ENCODE measurements at regions of chr15 and their contacts with region 1.

Region 1: GRCh38 chr15:98853161-98853560 is 154.4 kb downstream of the PGPEP1L start:
- DNase-seq: peak; percentile 87 to 96 (median 92)
- H3K4me3 ChIP-seq: peak overlapping the region; percentile 53 to 85 (median 71)
- H3K27ac ChIP-seq: peak overlapping the region; percentile 89 to 100 (median 99)
- H3K27me3 ChIP-seq: no peaks in the 10 kb centered on the region
- CTCF ChIP-seq: peak in 45 of 56 donors; percentile 3 to 53 (median 31)

Region 2: DNA sequence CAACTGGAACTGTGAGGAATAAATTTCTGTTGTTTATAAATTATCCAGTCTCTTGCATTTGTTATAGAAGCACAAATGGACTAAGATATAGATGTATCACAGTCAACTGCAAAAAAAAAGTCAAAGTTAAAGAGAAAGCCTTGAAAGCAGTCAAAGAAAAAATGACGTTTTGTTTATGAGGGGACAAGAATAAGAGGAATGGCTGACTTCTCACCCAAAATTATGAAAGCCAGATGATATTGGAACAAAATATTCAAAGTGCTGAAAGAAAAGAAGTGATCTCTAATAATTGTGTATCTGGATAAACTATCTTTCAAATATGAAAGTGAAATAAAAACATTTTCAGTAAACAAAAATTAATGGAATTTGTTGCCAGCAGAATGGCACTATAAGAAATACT is 376.6 kb before region 1 on chr15:
- intact Hi-C with region 1: no loop called
- DNase-seq: no peak
- H3K4me3 ChIP-seq: no peak overlapping the region
- H3K27ac ChIP-seq: no peak overlapping the region
- H3K27me3 ChIP-seq: no peaks in the 10 kb centered on the region
- CTCF ChIP-seq: no peak

Region 3: DNA sequence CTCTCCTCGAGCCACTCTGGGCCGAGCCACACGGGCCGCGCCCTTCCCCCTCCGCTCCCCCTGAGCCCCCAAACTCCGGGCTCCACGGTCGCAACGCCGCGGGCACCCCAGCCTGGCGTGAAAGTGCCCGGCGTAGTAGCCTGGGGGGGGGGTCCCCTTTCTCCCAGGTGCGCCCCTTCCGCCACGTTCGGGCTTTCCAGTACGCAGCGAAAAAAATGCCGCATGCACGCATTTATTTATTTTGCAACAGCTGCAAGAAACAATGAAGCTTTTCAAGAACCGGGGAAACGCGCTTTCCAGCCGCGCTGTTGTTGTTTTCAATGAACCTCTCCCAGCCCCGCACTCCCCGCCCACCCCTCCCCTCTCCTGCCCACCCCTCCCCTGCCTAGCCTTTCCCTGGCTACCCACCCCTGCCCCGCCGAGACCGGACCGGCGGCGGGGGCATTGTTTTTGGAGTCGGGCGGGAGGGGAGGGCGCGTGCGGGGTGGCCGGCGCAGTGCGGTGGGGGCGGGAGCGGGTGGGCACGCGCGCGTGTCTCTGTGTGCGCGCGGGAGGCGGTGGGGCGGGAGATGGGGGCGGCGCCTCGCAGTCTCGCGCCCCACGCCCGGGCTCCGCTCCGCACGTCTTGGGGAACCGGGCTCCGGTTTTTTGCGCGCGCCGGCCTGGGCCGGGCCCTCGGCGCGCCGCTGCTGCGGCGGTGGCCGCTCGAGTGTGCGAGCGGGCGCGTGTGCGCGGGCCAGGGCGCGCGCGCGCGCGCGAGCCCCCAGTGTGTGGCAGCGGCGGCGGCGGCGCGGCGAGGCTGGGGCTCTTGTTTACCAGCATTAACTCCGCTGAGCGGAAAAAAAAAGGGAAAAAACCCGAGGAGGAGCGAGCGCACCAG is 205.1 kb before region 1 on chr15 and contains the start of gene IGF1R:
- intact Hi-C with region 1: loop called (anchors 1 kb)
- DNase-seq: peak; percentile 70 to 89 (median 78)
- H3K4me3 ChIP-seq: peak within 1 kb of the TSS; percentile 73 to 98 (median 85)
- H3K27ac ChIP-seq: peak within 1 kb of the TSS; percentile 81 to 99 (median 94)
- H3K27me3 ChIP-seq: no peaks in the 10 kb centered on the region
- CTCF ChIP-seq: peak in 17 of 56 donors; percentile 4 to 47 (median 13)
- total RNA-seq, gene IGF1R: 53.3 to 130 (median 84.4) TPM

Region 4: GRCh38 chr15:98881526-98882520 is 28.7 kb after region 1 on chr15:
- intact Hi-C with region 1: loop called in 1 of 2 experiments (anchors 1 kb)
- DNase-seq: no peak
- H3K4me3 ChIP-seq: no peak overlapping the region
- H3K27ac ChIP-seq: no peak overlapping the region
- H3K27me3 ChIP-seq: no peaks in the 10 kb centered on the region
- CTCF ChIP-seq: peak; percentile 34 to 76 (median 66)

Region 5: GRCh38 chr15:98904544-98904943 is 51.4 kb after region 1 on chr15:
- intact Hi-C with region 1: loop called in 1 of 2 experiments (anchors 2 kb)
- DNase-seq: peak in 7 of 10 donors; percentile 31 to 64 (median 55)
- H3K4me3 ChIP-seq: no peak overlapping the region
- H3K27ac ChIP-seq: peak overlapping the region in 53 of 59 donors; percentile 9 to 91 (median 60)
- H3K27me3 ChIP-seq: no peaks in the 10 kb centered on the region
- CTCF ChIP-seq: peak; percentile 20 to 82 (median 69)

Region 6: DNA sequence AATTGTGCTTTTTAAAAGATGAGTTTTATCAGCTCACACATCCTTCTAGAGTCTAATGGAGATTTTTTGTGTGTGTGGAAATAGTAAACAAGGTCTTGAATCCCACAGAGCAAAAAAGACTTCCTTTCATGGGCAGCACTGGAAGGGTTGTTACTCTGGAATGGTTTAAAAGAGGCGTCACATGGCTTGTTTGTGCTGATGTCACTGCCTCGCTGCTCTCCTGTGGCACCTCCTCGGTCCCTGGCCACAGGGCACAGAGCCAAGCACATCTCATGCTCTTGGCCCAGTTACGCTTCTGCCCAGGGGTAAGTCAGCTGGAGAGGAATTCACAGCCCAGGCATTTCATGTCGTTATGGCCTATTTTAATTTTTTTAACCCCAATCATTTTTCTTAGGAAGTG is 101.2 kb after region 1 on chr15:
- intact Hi-C with region 1: loop called in 1 of 2 experiments (anchors 2 kb)
- DNase-seq: peak; percentile 41 to 84 (median 72)
- H3K4me3 ChIP-seq: peak overlapping the region in 1 of 59 donors; percentile 12
- H3K27ac ChIP-seq: peak overlapping the region; percentile 44 to 95 (median 84)
- H3K27me3 ChIP-seq: no peaks in the 10 kb centered on the region
- CTCF ChIP-seq: peak in 1 of 56 donors; percentile 16

Measured in dorsolateral prefrontal cortex (tissue), 120 donors.